ENCODE measurements at regions of chr16 and their contacts with region 1.

Region 1: DNA sequence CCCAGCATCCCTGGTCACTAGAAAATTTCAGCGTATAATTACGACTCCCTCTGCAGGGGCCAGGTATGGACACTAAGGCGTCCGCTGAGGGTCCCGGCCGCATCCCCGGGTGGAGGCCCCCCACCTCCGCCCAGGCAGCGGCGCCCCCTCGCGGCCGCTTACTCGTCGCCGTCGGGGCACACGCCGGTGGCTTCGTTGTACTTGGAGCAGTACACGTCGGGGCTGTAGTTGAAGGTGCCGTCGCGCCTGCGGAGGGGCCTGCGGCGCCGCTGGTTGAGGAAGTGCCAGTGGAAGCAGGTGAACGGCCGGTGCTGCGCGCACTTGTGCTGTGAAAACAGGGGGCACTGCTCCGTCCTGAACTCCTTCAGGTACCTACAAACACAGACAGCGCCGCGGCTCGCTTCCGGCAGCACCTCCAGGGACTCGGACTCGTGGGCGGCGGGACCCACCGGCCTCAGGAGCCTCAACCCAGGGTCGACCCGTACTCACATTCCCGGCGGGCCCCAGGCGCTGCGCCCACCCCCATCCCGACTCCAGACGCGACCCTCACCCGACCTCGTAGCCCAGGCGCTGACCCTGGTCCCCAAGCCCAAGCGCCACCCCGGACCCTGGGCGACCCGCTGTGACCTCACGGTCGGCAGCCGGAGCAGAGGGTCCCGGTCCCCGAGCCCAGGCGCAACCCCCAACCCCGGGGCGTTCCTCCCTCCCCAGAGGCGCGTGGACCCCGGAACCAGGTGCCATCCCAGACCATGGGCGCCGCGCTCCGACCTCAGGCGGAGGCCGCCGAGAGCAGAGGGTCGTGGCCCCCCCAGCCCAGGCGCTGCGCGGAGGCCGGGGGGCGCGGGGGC is 596 bp downstream of the UNKL start:
- DNase-seq: no peak
- ATAC-seq: peak; percentile 69
- H3K4me3 ChIP-seq: peak overlapping the region; percentile 61 to 64
- H3K27ac ChIP-seq: peak overlapping the region; percentile 60; the same call in 1 of the 2 replicates
- H3K4me1 ChIP-seq: peaks cover 8% of the 10 kb centered on the region; the same call in 1 of the 2 replicates
- H3K27me3 ChIP-seq: no peaks in the 10 kb centered on the region
- CTCF ChIP-seq: peak; percentile 93

Region 2: DNA sequence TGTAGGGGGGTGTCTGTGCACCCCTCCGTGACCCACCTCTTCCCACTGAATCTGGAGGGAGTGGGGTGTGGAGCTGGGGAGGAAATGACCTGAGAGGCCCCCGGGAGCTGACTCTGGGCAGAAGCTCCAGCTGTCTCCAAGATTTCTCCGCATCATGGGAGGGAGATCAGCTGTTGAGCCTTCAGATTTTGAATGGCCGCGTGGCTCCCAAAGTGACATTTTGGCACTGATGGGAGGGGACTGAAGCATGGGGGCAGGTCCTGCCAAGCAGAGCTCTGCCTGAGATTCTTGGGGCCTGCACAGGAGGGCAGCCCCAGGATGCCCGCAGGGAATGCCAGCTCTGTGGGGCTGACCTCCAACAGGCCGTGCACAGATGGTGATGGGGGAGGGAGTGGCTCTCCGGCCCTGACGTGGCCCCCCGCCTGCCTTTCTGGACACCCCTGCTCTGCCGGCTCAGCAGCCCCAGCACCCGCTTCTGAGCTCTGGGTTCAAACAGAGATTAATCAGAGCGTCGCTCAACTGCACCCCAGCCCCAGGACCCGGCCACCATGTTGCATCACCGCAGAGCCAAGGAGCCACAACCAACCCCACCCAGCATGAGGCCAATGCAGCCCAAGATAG is 129.8 kb before region 1 on chr16:
- CTCF ChIA-PET with region 1: no interaction called
- POLR2A ChIA-PET with region 1: interaction called, 10 read pairs
- in situ Hi-C with region 1: no loop called
- intact Hi-C with region 1: no loop called
- DNase-seq: no peak
- ATAC-seq: peak; percentile 36; the same call in 1 of the 2 replicates
- H3K4me3 ChIP-seq: no peak overlapping the region
- H3K27ac ChIP-seq: no peak overlapping the region
- H3K4me1 ChIP-seq: peaks cover 4% of the 10 kb centered on the region; the same call in 1 of the 2 replicates
- H3K27me3 ChIP-seq: no peaks in the 10 kb centered on the region
- CTCF ChIP-seq: no peak

Region 3: GRCh38 chr16:1331712-1332617 is 81.9 kb before region 1 on chr16:
- CTCF ChIA-PET with region 1: interaction called, 16 read pairs
- POLR2A ChIA-PET with region 1: no interaction called
- in situ Hi-C with region 1: no loop called
- intact Hi-C with region 1: no loop called
- DNase-seq: no peak
- ATAC-seq: peak; percentile 56
- H3K4me3 ChIP-seq: peak overlapping the region in 1 of 2 experiments; percentile 43; a peak in 2 of 4 replicates
- H3K27ac ChIP-seq: peak overlapping the region; percentile 57; the same call in 1 of the 2 replicates
- H3K4me1 ChIP-seq: peaks cover 17% of the 10 kb centered on the region
- H3K27me3 ChIP-seq: no peaks in the 10 kb centered on the region
- CTCF ChIP-seq: no peak

Region 4: DNA sequence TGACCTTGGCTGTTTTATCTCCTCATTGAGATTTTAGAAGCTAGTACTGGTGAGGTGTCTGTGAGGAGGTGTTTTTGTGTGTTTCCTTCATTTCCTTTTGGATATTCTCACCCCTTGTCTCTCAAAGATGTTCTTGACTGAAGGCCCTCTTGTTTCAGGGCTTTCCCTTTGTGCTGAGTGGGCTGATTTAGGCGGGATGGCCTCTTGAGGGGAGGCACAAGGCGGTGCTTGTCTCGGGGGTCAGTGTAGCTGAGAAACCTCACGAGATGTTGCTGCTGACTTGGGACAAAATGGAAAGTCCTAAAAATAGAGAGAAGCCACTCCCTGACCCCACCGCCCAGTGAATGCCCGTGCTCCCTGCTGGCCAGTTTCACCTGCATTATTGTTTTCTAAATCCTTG is 212.4 kb after region 1 on chr16:
- CTCF ChIA-PET with region 1: no interaction called
- POLR2A ChIA-PET with region 1: interaction called, 12 read pairs
- in situ Hi-C with region 1: no loop called
- intact Hi-C with region 1: no loop called
- DNase-seq: no peak
- ATAC-seq: no peak
- H3K4me3 ChIP-seq: no peak overlapping the region
- H3K27ac ChIP-seq: no peak overlapping the region
- H3K4me1 ChIP-seq: no peaks in the 10 kb centered on the region
- H3K27me3 ChIP-seq: no peaks in the 10 kb centered on the region
- CTCF ChIP-seq: no peak

Measured in Panc1 (cell line).